ENCODE measurements at regions of chr10 and their contacts with region 1.

Region 1: DNA sequence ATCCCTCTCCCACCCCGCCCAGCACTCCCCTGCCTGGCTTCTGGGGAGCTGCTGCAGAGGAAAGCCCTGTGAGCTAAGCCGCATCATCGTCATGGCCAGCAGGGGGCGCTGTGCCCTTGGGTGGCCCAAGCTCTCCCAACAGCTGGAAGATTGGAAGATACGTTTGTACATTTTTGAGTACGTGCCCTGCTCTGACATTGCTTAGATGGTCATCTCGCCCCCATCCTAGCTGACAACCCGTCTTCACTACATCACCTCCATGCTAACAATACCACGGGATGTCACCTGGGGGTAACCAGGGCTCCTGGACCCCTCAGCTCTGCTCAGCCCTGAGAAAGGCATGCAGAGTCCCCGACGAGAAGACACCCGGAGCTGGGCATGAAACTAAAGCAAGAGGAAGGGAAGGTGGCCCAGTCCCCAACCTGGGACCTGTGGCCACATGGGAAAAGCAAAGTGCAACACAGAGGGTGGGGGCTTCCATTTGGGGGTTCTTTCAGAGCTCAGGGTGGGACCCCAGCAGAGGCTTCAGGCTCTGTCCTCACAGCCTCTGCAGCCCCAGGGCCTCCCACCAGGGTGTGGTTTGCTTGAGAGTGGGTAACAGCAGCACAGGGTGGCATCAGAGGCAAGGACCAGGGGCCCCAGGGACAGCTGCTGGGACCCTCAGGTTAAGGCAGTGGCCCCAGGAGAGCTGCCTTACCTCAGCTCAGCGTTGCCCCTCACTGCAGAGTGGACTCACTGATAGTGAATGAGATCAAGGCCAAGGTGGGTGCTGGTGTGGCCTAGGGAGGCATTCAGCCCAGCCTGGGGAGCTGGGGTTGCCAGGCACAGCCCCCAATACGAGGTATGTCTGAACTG is 136.7 kb downstream of the PTPN20 start:
- DNase-seq: peak; percentile 44 to 80 (median 67)
- ATAC-seq: peak; percentile 74
- H3K4me3 ChIP-seq: no peak overlapping the region
- H3K4me3 Mint-ChIP-seq: peak overlapping the region in 4 of 10 donors; percentile 5 to 59 (median 37)
- H3K27ac ChIP-seq: no peak overlapping the region
- H3K27ac Mint-ChIP-seq: peak overlapping the region in 8 of 9 donors; percentile 20 to 90 (median 54)
- H3K4me1 ChIP-seq: peaks cover 6 to 14% of the 10 kb centered on the region in 2 donors
- H3K4me1 Mint-ChIP-seq: peaks cover 7 to 24% (median 19%) of the 10 kb centered on the region in 7 donors
- H3K27me3 ChIP-seq: no peaks in the 10 kb centered on the region
- H3K27me3 Mint-ChIP-seq: no peaks in the 10 kb centered on the region

Region 2: GRCh38 chr10:46995234-46995633 is 52.7 kb before region 1 on chr10:
- CTCF ChIA-PET with region 1: no interaction called
- POLR2A ChIA-PET with region 1: no interaction called
- intact Hi-C with region 1: no loop called
- DNase-seq: no peak
- ATAC-seq: no peak
- H3K4me3 ChIP-seq: no peak overlapping the region
- H3K4me3 Mint-ChIP-seq: no peak overlapping the region
- H3K27ac ChIP-seq: no peak overlapping the region
- H3K27ac Mint-ChIP-seq: no peak overlapping the region
- H3K4me1 ChIP-seq: no peaks in the 10 kb centered on the region
- H3K4me1 Mint-ChIP-seq: no peaks in the 10 kb centered on the region
- H3K27me3 ChIP-seq: no peaks in the 10 kb centered on the region
- H3K27me3 Mint-ChIP-seq: peaks cover 0 to 18% (median 7%) of the 10 kb centered on the region in 5 donors

Region 3: DNA sequence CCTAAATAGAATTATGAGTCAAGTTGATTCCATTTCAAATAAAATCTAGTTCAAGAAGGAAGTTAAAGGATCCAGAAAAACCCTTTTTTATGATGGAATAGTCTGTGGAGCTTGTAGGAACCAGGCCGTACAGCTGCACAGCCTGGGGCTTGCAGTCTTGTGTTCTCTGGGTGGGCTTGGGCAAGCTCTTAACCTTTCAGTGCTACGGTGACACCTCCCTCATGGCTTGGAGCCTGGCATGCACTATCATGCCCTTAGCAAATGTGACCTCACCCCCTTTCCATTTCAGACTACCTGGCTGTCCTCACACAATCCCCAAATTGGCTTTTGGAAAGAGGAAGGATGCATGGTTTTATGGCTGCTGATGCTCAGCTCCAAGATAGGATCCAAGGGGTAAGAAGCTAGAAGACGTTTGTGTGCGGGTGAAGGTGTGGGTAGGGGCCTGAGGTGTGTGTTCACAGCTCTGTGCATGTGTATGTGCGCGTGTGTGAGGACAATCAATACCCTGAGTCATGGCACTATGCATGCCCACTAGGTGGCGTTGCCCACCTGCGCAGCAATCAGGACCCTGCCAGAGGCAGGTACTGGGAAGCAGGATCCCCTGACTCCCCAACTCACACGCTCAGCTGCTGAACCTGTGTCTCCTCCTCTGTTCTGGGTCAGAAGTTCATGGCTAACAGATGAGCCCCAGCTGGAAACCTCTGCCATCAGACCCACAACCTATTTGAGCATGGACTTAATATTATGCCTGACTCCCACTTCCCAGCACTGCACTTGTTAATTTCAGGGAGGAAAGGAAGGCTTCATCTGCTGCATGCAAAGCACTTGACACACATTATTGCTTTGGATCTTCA is 23.3 kb before region 1 on chr10:
- CTCF ChIA-PET with region 1: interaction called, 34 read pairs
- POLR2A ChIA-PET with region 1: interaction called, 3 read pairs
- intact Hi-C with region 1: loop called in 1 of 2 experiments (anchors 1 kb)
- DNase-seq: peak; percentile 43 to 73 (median 60)
- ATAC-seq: peak; percentile 76
- H3K4me3 ChIP-seq: no peak overlapping the region
- H3K4me3 Mint-ChIP-seq: no peak overlapping the region
- H3K27ac ChIP-seq: no peak overlapping the region
- H3K27ac Mint-ChIP-seq: peak overlapping the region in 1 of 9 donors; percentile 53
- H3K4me1 ChIP-seq: no peaks in the 10 kb centered on the region
- H3K4me1 Mint-ChIP-seq: peaks cover 0 to 7% (median 5%) of the 10 kb centered on the region in 7 donors
- H3K27me3 ChIP-seq: no peaks in the 10 kb centered on the region
- H3K27me3 Mint-ChIP-seq: peaks cover 0 to 7% (median 4%) of the 10 kb centered on the region in 5 donors

Region 4: GRCh38 chr10:47031211-47031900 is 16.5 kb before region 1 on chr10:
- CTCF ChIA-PET with region 1: interaction called, 34 read pairs
- POLR2A ChIA-PET with region 1: no interaction called
- intact Hi-C with region 1: no loop called
- DNase-seq: no peak
- ATAC-seq: no peak
- H3K4me3 ChIP-seq: no peak overlapping the region
- H3K4me3 Mint-ChIP-seq: no peak overlapping the region
- H3K27ac ChIP-seq: no peak overlapping the region
- H3K27ac Mint-ChIP-seq: no peak overlapping the region
- H3K4me1 ChIP-seq: no peaks in the 10 kb centered on the region
- H3K4me1 Mint-ChIP-seq: no peaks in the 10 kb centered on the region
- H3K27me3 ChIP-seq: no peaks in the 10 kb centered on the region
- H3K27me3 Mint-ChIP-seq: no peaks in the 10 kb centered on the region

Region 5: DNA sequence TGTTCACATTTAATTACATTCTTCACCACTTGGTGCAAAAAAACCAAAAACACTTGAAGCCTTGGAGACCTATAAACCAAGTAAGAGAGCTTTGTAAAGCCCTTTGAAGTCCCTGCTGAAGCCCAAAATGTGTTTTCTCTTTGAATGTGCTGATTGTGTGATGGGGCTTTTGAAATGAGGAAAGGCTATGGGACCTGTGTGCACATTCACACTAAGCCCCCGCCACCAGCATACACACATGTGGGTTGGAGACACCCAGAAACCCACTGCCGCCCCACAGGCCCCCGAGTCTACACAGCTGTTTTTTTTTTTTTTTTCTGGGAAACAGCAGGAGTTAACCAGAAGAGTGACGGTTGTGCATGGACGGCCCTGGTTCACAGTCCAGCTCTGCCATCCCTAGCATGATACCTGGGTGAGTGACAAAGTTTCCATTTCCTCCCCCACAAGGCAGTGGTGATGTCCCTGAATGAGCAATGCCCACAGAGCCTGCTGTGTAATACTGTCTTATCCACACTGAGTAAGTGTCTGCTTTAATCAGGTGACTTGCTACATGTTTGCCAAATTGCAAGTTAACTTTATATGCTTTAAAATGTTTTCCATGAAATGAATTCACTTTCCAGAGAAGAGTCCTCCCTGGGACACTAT is 97.5 kb after region 1 on chr10:
- CTCF ChIA-PET with region 1: no interaction called
- POLR2A ChIA-PET with region 1: no interaction called
- intact Hi-C with region 1: no loop called
- DNase-seq: no peak
- ATAC-seq: no peak
- H3K4me3 ChIP-seq: no peak overlapping the region
- H3K4me3 Mint-ChIP-seq: no peak overlapping the region
- H3K27ac ChIP-seq: no peak overlapping the region
- H3K27ac Mint-ChIP-seq: no peak overlapping the region
- H3K4me1 ChIP-seq: no peaks in the 10 kb centered on the region
- H3K4me1 Mint-ChIP-seq: peaks cover 0 to 13% (median 2%) of the 10 kb centered on the region in 7 donors
- H3K27me3 ChIP-seq: no peaks in the 10 kb centered on the region
- H3K27me3 Mint-ChIP-seq: peaks cover 0 to 19% (median 0%) of the 10 kb centered on the region in 5 donors

Region 6: GRCh38 chr10:47165711-47166524 is 118.0 kb after region 1 on chr10:
- CTCF ChIA-PET with region 1: interaction called, 14 read pairs
- POLR2A ChIA-PET with region 1: interaction called, 4 read pairs
- intact Hi-C with region 1: loop called (anchors 1 to 10 kb)
- DNase-seq: peak; percentile 41 to 80 (median 68)
- ATAC-seq: peak; percentile 82
- H3K4me3 ChIP-seq: peak overlapping the region; percentile 71
- H3K4me3 Mint-ChIP-seq: peak overlapping the region; percentile 79 to 93 (median 92)
- H3K27ac ChIP-seq: peak overlapping the region; percentile 77
- H3K27ac Mint-ChIP-seq: peak overlapping the region; percentile 84 to 100 (median 99)
- H3K4me1 ChIP-seq: peaks cover 12 to 23% of the 10 kb centered on the region in 2 donors
- H3K4me1 Mint-ChIP-seq: peaks cover 19 to 43% (median 28%) of the 10 kb centered on the region in 7 donors
- H3K27me3 ChIP-seq: no peaks in the 10 kb centered on the region
- H3K27me3 Mint-ChIP-seq: peaks cover 0 to 9% (median 0%) of the 10 kb centered on the region in 5 donors

Region 7: DNA sequence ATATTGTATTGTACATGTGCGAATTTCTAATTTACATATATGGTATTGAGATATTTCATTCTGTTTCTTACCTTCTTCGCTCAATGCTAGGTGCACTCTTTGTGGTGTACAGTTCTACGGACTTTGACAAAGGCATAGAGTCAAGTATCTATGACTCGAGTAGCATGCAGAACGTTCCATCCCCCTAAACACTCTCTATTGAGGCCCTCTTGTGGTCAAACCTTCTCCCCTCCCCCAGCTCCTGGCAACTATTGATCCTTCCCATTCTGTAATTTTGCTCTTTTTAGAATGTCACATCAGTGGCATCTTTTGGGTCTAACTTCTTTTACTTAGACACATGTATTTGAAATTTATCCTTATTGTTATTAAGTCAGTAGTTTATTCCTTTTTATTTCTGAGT is 221.4 kb after region 1 on chr10:
- CTCF ChIA-PET with region 1: interaction called, 4 read pairs
- POLR2A ChIA-PET with region 1: no interaction called
- intact Hi-C with region 1: loop called in 1 of 2 experiments (anchors 1 kb)
- DNase-seq: no peak
- ATAC-seq: no peak
- H3K4me3 ChIP-seq: no peak overlapping the region
- H3K4me3 Mint-ChIP-seq: peak overlapping the region in 1 of 10 donors; percentile 14
- H3K27ac ChIP-seq: no peak overlapping the region
- H3K27ac Mint-ChIP-seq: peak overlapping the region in 4 of 9 donors; percentile 13 to 53 (median 28)
- H3K4me1 ChIP-seq: peaks cover 9 to 18% of the 10 kb centered on the region in 2 donors
- H3K4me1 Mint-ChIP-seq: peaks cover 7 to 48% (median 35%) of the 10 kb centered on the region in 7 donors
- H3K27me3 ChIP-seq: no peaks in the 10 kb centered on the region
- H3K27me3 Mint-ChIP-seq: no peaks in the 10 kb centered on the region

Region 8: GRCh38 chr10:47340608-47341170 is 292.8 kb after region 1 on chr10:
- CTCF ChIA-PET with region 1: interaction called, 15 read pairs
- POLR2A ChIA-PET with region 1: no interaction called
- intact Hi-C with region 1: loop called (anchors 1 kb)
- DNase-seq: peak; percentile 45 to 76 (median 64)
- ATAC-seq: peak; percentile 88
- H3K4me3 ChIP-seq: no peak overlapping the region
- H3K4me3 Mint-ChIP-seq: no peak overlapping the region
- H3K27ac ChIP-seq: no peak overlapping the region
- H3K27ac Mint-ChIP-seq: no peak overlapping the region
- H3K4me1 ChIP-seq: no peaks in the 10 kb centered on the region
- H3K4me1 Mint-ChIP-seq: peaks cover 0 to 5% (median 0%) of the 10 kb centered on the region in 7 donors
- H3K27me3 ChIP-seq: no peaks in the 10 kb centered on the region
- H3K27me3 Mint-ChIP-seq: peaks cover 4 to 20% (median 11%) of the 10 kb centered on the region in 5 donors

Measured in naive thymus-derived CD4-positive, alpha-beta T cell (primary cell).